ENCODE measurements at regions of chr7 and their contacts with region 1.

Region 1: DNA sequence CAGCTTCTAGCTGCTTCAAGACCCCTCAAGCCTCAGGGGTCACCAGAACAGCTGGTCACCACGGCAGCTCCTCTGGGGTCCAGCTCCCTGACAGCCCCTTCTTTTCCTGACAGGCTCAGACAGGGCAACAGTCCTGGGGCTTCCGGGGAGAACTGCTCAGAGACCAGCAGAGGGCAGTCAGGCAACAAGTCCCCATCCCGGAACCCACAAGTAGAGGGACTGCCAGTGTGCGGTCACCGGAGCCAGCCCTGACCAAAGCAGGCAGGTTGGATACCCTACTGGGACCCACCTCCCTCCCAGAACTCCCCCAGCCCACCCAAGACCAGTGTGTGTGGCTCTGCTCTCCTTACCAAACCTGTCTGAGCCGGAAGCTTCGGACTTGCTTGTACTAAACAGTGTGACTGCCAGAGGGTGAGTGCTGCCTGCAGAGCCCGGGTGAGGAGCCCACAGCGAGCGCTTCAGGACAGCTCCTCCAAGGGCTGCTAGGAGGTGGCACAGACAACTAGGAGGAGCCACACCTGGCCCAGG is 40.3 kb downstream of the YKT6 start:
- DNase-seq: peak; percentile 84 to 92
- ATAC-seq: peak; percentile 87 to 96
- H3K4me3 ChIP-seq: no peak overlapping the region
- H3K27ac ChIP-seq: peak overlapping the region; percentile 24 to 79; a peak in 4 of 6 replicates
- H3K4me1 ChIP-seq: no peaks in the 10 kb centered on the region
- CTCF ChIP-seq: peak; percentile 83
- EP300 ChIP-seq: no peak
- POLR2A ChIP-seq: no peak
- RAD21 ChIP-seq: peak; percentile 81 to 86

Region 2: GRCh38 chr7:44225566-44226395 is 15.3 kb before region 1 on chr7:
- CTCF ChIA-PET with region 1: interaction called, 31 read pairs
- POLR2A ChIA-PET with region 1: no interaction called
- DNase-seq: no peak
- ATAC-seq: peak in 1 of 2 experiments; percentile 29; a peak in 3 of 6 replicates
- H3K4me3 ChIP-seq: no peak overlapping the region
- H3K27ac ChIP-seq: no peak overlapping the region
- H3K4me1 ChIP-seq: no peaks in the 10 kb centered on the region
- CTCF ChIP-seq: no peak
- EP300 ChIP-seq: no peak
- POLR2A ChIP-seq: no peak
- RAD21 ChIP-seq: no peak

Region 3: DNA sequence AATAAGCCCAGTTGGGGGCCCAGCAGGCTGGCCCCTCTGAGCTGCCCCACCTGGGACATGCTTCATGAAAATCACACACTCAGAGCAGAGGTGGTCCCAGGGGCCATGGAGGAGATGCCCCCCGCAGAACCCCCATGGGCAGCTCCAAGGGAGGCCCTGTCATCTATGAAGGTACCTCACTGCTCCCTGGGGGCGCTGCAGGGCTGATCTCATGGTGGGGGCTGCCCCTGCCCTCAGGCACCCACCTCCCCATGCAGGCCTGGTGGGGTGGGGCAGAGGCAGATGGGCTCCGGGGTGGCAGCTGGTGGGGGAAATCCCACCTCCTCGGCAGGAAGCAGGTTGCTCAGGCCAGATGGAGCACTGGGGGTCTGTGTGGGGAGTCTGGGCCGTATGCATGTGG is 20.2 kb after region 1 on chr7:
- CTCF ChIA-PET with region 1: interaction called, 10 read pairs
- POLR2A ChIA-PET with region 1: no interaction called
- DNase-seq: no peak
- ATAC-seq: no peak
- H3K4me3 ChIP-seq: no peak overlapping the region
- H3K27ac ChIP-seq: no peak overlapping the region
- H3K4me1 ChIP-seq: no peaks in the 10 kb centered on the region
- CTCF ChIP-seq: no peak
- EP300 ChIP-seq: no peak
- POLR2A ChIP-seq: no peak
- RAD21 ChIP-seq: no peak

Region 4: GRCh38 chr7:44307301-44307900 is 66.4 kb after region 1 on chr7:
- CTCF ChIA-PET with region 1: interaction called, 12 read pairs
- POLR2A ChIA-PET with region 1: no interaction called
- DNase-seq: peak; percentile 44 to 59
- ATAC-seq: peak; percentile 84 to 87
- H3K4me3 ChIP-seq: no peak overlapping the region
- H3K27ac ChIP-seq: no peak overlapping the region
- H3K4me1 ChIP-seq: no peaks in the 10 kb centered on the region
- CTCF ChIP-seq: peak; percentile 30
- EP300 ChIP-seq: no peak
- POLR2A ChIP-seq: no peak
- RAD21 ChIP-seq: peak; percentile 50 to 68

Region 5: DNA sequence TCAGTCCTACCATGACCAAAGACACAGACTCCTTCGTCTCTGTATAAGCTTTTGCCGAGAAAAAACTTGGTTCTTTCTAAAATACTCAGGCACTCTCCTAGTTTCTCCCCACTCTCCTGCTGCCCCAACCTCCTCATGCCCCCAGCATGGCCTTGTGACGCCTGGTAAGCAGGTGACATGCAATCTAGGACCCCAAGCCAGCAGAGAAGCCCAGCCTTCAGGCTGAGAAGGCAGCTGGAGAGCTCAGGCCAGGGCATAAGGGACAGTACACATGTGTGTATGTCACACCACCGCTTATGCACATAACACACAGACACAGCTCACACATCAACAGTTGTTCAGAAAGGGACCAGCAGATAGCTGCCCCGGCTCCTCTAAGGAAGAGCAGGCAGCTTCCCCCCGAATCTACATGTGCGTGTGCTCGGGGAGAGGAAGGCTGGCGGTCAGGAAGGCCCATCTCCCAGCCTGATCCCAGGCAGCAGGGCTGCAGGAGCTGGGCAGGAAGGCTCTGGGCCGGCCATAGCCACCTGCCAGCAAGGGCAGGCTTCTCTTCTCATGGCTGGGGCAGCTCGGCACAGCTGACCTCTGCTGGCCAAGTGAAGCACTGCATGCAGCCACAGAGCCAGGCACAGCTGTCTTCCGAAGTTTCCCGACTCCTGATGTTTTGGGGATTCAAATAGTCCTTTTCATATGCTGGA is 324.2 kb after region 1 on chr7:
- CTCF ChIA-PET with region 1: interaction called, 55 read pairs
- POLR2A ChIA-PET with region 1: interaction called, 3 read pairs
- DNase-seq: peak; percentile 59 to 63
- ATAC-seq: peak; percentile 76 to 83
- H3K4me3 ChIP-seq: no peak overlapping the region
- H3K27ac ChIP-seq: no peak overlapping the region
- H3K4me1 ChIP-seq: peaks cover 25% of the 10 kb centered on the region
- CTCF ChIP-seq: peak; percentile 81
- EP300 ChIP-seq: no peak
- POLR2A ChIP-seq: no peak
- RAD21 ChIP-seq: peak; percentile 70 to 74

Measured in A549 (cell line).